GM10248 (cell line): ENCODE measurements at regions of chr1 and their contacts with region 1.

Region 1: GRCh38 chr1:66446261-66447001 is 87.5 kb upstream of the SGIP1 start:
- DNase-seq: peak; percentile 64
- CTCF ChIP-seq: peak; percentile 72

Region 2: GRCh38 chr1:65958561-65959350 is 487.7 kb before region 1 on chr1:
- CTCF ChIA-PET with region 1: interaction called, 60 read pairs
- POLR2A ChIA-PET with region 1: no interaction called
- DNase-seq: peak; percentile 33
- CTCF ChIP-seq: peak; percentile 40

Region 3: DNA sequence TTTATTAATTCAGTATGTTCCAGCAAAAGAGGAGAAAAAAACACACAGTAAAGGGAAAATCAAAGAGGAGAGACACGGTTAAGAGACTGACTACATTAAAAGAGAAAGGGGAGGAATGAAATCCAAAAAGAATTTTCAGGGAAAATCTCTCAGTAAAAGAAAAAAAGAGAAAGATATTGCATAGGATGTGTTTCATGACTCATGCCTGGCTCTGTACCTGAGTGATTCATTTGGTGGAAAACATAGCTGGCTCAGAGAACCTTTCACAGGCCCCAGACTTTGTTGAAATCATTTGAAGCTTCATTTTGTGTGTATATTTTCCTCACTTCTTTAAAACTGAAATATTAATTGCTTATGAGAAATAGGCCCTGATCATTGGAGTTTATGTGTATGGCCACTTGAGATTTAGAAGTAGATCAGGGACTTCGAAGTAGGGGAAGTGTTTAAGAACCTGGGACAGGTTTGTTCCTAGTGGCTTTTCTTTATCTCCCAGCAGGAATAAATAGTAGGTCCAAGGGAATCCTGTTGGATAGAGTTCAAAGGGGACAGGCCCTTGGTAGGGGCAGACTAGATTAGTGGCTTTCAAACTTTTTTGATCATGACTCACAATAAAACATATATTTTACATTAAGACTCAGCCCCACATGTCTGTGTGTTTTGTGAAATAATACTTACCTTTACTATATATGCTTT is 151.6 kb before region 1 on chr1:
- CTCF ChIA-PET with region 1: interaction called, 10 read pairs
- POLR2A ChIA-PET with region 1: no interaction called
- DNase-seq: no peak
- CTCF ChIP-seq: no peak

Region 4: GRCh38 chr1:66350001-66350547 is 96.4 kb before region 1 on chr1:
- CTCF ChIA-PET with region 1: interaction called, 30 read pairs
- POLR2A ChIA-PET with region 1: no interaction called
- DNase-seq: no peak
- CTCF ChIP-seq: no peak

Region 5: GRCh38 chr1:66380452-66381212 is 65.8 kb before region 1 on chr1:
- CTCF ChIA-PET with region 1: interaction called, 47 read pairs
- POLR2A ChIA-PET with region 1: no interaction called
- DNase-seq: peak; percentile 53
- CTCF ChIP-seq: no peak

Region 6: GRCh38 chr1:66503841-66504470 is 57.5 kb after region 1 on chr1:
- CTCF ChIA-PET with region 1: interaction called, 27 read pairs
- POLR2A ChIA-PET with region 1: no interaction called
- DNase-seq: peak; percentile 18
- CTCF ChIP-seq: peak; percentile 69

Region 7: GRCh38 chr1:66521721-66522365 is 75.4 kb after region 1 on chr1:
- CTCF ChIA-PET with region 1: no interaction called
- POLR2A ChIA-PET with region 1: no interaction called
- DNase-seq: no peak
- CTCF ChIP-seq: no peak

Region 8: GRCh38 chr1:66648901-66649595 is 202.6 kb after region 1 on chr1:
- CTCF ChIA-PET with region 1: no interaction called
- POLR2A ChIA-PET with region 1: no interaction called
- DNase-seq: peak; percentile 12
- CTCF ChIP-seq: no peak